WTC11 (cell line): ENCODE measurements at regions of chr5 and their contacts with region 1.

Region 1: GRCh38 chr5:80346055-80346454 is 26.3 kb downstream of the SPZ1 start:
- DNase-seq: peak; percentile 37
- ATAC-seq: peak; percentile 88
- H3K4me3 Mint-ChIP-seq: no peak overlapping the region
- H3K27ac Mint-ChIP-seq: no peak overlapping the region
- H3K4me1 Mint-ChIP-seq: no peaks in the 10 kb centered on the region
- H3K27me3 Mint-ChIP-seq: no peaks in the 10 kb centered on the region
- CTCF ChIP-seq: peak; percentile 31; the same call in 1 of the 2 replicates

Region 2: GRCh38 chr5:80308526-80308925 is 37.5 kb before region 1 on chr5:
- CTCF ChIA-PET with region 1: interaction called, 11 read pairs
- POLR2A ChIA-PET with region 1: no interaction called
- DNase-seq: no peak
- ATAC-seq: peak; percentile 24; the same call in 1 of the 2 replicates
- H3K4me3 Mint-ChIP-seq: no peak overlapping the region
- H3K27ac Mint-ChIP-seq: no peak overlapping the region
- H3K4me1 Mint-ChIP-seq: peaks cover 19% of the 10 kb centered on the region
- H3K27me3 Mint-ChIP-seq: no peaks in the 10 kb centered on the region; the same call in 1 of the 2 replicates
- CTCF ChIP-seq: no peak

Region 3: DNA sequence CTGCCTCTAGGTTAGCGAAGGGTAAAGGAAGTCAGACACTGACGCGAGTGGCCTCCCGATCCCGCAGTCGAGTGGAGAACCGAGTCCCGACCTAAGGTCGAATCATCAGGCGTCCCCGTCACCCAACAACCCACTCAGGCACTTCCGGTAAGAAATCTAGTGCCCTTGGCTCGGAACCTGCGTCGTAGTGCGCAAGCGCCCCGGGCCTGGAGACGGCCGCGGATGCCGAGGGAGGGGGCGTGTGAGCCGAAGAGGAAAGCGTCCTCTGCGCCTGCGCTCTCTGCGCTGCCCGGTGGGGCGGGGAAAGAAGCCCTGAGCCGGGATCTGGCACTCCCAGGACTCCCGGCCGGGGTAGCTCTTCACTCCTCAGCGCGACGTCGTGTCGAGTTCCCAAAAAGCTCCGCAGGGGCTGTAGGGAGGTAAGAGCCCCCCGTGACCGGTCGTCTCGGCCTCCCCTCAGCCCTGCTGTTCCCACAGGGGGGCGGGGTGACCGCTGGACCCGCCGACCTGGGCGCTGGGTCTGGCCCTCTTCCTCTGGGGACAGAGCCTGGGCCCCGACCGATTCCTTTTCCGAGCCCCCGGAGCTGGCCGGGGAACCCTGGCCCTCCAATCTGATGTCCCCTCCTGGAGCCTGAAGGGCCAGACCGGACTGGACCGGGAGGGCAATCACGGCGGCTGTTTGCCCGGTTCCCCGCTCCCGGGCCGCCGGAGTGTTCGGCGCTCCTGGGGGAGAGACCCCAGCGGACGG is 61.9 kb after region 1 on chr5 and contains the start of gene ZFYVE16:
- CTCF ChIA-PET with region 1: interaction called, 18 read pairs
- POLR2A ChIA-PET with region 1: no interaction called
- DNase-seq: peak; percentile 98
- ATAC-seq: peak; percentile 94
- H3K4me3 Mint-ChIP-seq: peak within 1 kb of the TSS; percentile 95
- H3K27ac Mint-ChIP-seq: peak within 1 kb of the TSS; percentile 95
- H3K4me1 Mint-ChIP-seq: peaks cover 11% of the 10 kb centered on the region
- H3K27me3 Mint-ChIP-seq: no peaks in the 10 kb centered on the region
- CTCF ChIP-seq: no peak
- total RNA-seq, gene ZFYVE16: 25.3 to 35.1 TPM (median 32.5 TPM) in 3 replicates